Activated B cell treated with CpG ODN at 0.5 μM for 24 hours (primary cell): ENCODE measurements at regions of chr5 and their contacts with region 1.

Region 1: DNA sequence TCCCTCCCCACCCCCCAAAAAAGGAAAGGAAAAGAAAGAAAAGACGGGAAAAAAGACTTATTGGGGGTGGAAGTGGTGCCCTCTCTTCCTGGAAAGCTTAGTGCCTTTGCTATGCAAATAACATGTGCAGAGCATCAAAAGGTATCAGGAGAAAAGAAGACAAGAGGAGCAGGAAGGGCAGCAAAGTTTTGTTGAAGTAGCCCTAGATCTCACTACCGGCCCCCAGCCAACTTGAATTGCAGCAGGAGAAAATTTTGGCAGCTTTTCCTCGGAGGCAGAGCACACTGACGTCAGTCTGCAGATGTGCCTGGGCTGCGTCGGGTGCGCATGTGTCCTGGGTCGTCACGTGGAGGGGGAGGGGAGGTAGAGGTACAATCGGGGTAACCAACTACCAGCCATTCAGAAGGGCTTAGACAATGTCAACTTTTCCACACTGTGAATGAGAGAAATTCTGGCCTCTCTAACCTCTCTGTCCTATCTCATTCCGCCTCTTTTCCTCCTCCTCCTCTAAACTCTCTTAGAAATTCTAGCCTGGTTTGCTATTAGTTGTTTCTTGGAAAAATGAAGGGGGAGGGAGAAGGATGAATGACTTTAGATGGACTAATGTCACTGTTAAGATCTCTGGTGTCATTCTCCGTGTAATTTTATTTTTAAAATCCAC is at the start of gene ADAMTS6:
- DNase-seq: peak; percentile 61
- ATAC-seq: peak; percentile 87
- H3K4me3 Mint-ChIP-seq: no peak within 1 kb of the TSS
- H3K27ac Mint-ChIP-seq: peak within 1 kb of the TSS; percentile 83
- H3K4me1 Mint-ChIP-seq: peaks cover 9% of the 10 kb centered on the region
- H3K27me3 Mint-ChIP-seq: no peaks in the 10 kb centered on the region
- CTCF ChIP-seq: no peak
- total RNA-seq, gene ADAMTS6: 3.2 and 4.1 TPM in 2 replicates

Region 2: GRCh38 chr5:64768358-64769312 is 713.1 kb before region 1 on chr5 and contains the starts of genes CWC27 and SREK1IP1:
- CTCF ChIA-PET with region 1: interaction called, 7 read pairs
- POLR2A ChIA-PET with region 1: no interaction called
- intact Hi-C with region 1: loop called (anchors 1 kb)
- DNase-seq: peak; percentile 69
- ATAC-seq: peak; percentile 95
- H3K4me3 Mint-ChIP-seq: peak within 1 kb of the TSS; percentile 100
- H3K27ac Mint-ChIP-seq: peak within 1 kb of the TSS; percentile 99
- H3K4me1 Mint-ChIP-seq: peaks cover 62% of the 10 kb centered on the region
- H3K27me3 Mint-ChIP-seq: no peaks in the 10 kb centered on the region
- CTCF ChIP-seq: no peak
- total RNA-seq, gene CWC27: 28.9 and 29.2 TPM in 2 replicates
- total RNA-seq, gene SREK1IP1: 21.7 and 22.2 TPM in 2 replicates

Region 3: DNA sequence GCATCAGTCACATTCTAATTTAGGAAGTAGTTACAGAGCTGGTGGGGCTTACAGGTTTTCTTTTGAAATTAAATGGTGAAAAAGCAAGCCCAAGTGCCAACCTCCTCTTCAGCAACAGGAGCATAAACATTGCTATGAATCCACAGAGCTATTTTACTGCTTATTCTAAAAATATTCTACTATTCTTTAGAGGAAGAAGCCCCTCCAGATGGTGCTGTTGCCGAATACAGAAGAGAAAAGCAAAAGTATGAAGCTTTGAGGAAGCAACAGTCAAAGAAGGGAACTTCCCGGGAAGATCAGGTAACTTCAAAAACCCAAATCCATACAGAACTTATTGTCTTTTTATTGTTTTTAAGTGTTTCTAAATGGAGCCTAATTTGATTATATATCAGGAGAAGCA is 510.3 kb before region 1 on chr5:
- CTCF ChIA-PET with region 1: interaction called, 21 read pairs
- POLR2A ChIA-PET with region 1: no interaction called
- intact Hi-C with region 1: loop called (anchors 1 kb)
- DNase-seq: no peak
- ATAC-seq: no peak
- H3K4me3 Mint-ChIP-seq: no peak overlapping the region
- H3K27ac Mint-ChIP-seq: no peak overlapping the region
- H3K4me1 Mint-ChIP-seq: no peaks in the 10 kb centered on the region
- H3K27me3 Mint-ChIP-seq: no peaks in the 10 kb centered on the region
- CTCF ChIP-seq: no peak

Region 4: GRCh38 chr5:65102828-65103711 is 378.7 kb before region 1 on chr5:
- CTCF ChIA-PET with region 1: interaction called, 9 read pairs
- POLR2A ChIA-PET with region 1: interaction called, 6 read pairs
- intact Hi-C with region 1: loop called (anchors 1 kb)
- DNase-seq: peak; percentile 57
- ATAC-seq: peak; percentile 89
- H3K4me3 Mint-ChIP-seq: peak overlapping the region; percentile 88
- H3K27ac Mint-ChIP-seq: peak overlapping the region; percentile 91
- H3K4me1 Mint-ChIP-seq: peaks cover 27% of the 10 kb centered on the region
- H3K27me3 Mint-ChIP-seq: no peaks in the 10 kb centered on the region
- CTCF ChIP-seq: no peak

Region 5: GRCh38 chr5:65418661-65419060 is 63.1 kb before region 1 on chr5:
- CTCF ChIA-PET with region 1: no interaction called
- POLR2A ChIA-PET with region 1: no interaction called
- intact Hi-C with region 1: no loop called
- DNase-seq: no peak
- ATAC-seq: no peak
- H3K4me3 Mint-ChIP-seq: no peak overlapping the region
- H3K27ac Mint-ChIP-seq: no peak overlapping the region
- H3K4me1 Mint-ChIP-seq: no peaks in the 10 kb centered on the region
- H3K27me3 Mint-ChIP-seq: no peaks in the 10 kb centered on the region
- CTCF ChIP-seq: no peak

Region 6: GRCh38 chr5:65624571-65625555 is 143.1 kb after region 1 on chr5 and contains the starts of genes SHLD3 and TRAPPC13:
- CTCF ChIA-PET with region 1: interaction called, 3 read pairs
- POLR2A ChIA-PET with region 1: no interaction called
- intact Hi-C with region 1: loop called (anchors 1 kb)
- DNase-seq: peak; percentile 58
- ATAC-seq: peak; percentile 74
- H3K4me3 Mint-ChIP-seq: peak within 1 kb of the TSS; percentile 99
- H3K27ac Mint-ChIP-seq: peak within 1 kb of the TSS; percentile 98
- H3K4me1 Mint-ChIP-seq: peaks cover 43% of the 10 kb centered on the region
- H3K27me3 Mint-ChIP-seq: no peaks in the 10 kb centered on the region
- CTCF ChIP-seq: no peak
- total RNA-seq, gene SHLD3: 5.7 and 6.2 TPM in 2 replicates
- total RNA-seq, gene TRAPPC13: 19.3 and 29.0 TPM in 2 replicates

Region 7: DNA sequence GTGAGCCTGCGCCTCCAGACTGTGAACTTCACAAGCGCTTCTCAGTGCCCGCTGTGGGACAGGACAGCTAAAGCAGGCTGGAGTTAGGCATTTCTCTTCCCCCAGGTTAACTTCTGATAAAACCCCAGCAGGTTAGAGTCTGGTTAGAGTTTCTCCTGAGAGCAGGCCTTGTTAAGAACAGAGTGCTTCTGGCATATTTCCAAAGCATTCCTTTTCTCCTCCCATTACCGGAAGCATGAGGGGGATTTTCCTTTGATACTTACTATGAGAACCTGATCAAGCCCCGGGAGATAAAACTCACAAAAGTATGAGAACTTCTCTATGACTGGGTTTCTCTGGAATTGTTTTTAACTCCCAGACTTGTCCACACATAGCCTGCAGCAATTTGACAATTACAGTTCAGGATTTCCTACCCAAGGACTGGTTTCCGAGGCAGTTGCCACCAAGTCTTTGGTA is 1037.0 kb after region 1 on chr5:
- CTCF ChIA-PET with region 1: no interaction called
- POLR2A ChIA-PET with region 1: no interaction called
- intact Hi-C with region 1: loop called (anchors 5 kb)
- DNase-seq: no peak
- ATAC-seq: no peak
- H3K4me3 Mint-ChIP-seq: no peak overlapping the region
- H3K27ac Mint-ChIP-seq: no peak overlapping the region
- H3K4me1 Mint-ChIP-seq: peaks cover 39% of the 10 kb centered on the region
- H3K27me3 Mint-ChIP-seq: no peaks in the 10 kb centered on the region
- CTCF ChIP-seq: no peak